ENCODE measurements at regions of chr3 and their contacts with region 1.

Region 1: DNA sequence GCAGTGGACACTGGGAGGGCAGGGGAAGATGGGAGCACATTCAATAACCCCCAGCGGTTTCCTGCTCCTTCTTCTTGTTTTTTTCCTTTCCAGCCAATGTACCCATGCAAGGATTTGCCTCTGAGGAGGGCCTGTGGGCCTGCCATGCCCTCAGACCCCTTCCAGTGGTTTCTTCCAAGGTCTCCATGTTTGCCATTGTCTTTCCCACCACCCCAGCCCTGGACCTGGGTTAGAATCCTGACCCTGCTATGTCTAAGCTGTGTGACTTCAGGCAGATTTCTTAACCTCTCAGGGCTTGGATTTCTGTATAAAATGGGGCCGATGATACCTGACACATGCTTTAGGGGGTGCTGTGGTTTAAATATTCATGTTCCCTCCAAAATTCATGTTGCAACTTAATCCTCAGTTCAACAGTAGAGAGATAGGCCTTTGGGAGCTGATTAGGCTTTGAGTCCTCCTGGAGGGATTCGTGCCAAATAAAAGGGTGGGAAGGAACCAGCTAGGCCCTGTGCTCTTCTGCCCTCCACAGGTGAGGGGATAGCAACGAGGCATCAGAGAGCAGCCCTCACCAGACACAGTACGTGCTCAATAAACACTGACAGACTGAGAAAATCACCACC is 46.3 kb upstream of the FLNB start:
- DNase-seq: peak in 1 of 2 experiments; percentile 60
- H3K4me3 ChIP-seq: no peak overlapping the region
- H3K4me3 Mint-ChIP-seq: no peak overlapping the region
- H3K27ac Mint-ChIP-seq: peak overlapping the region; percentile 49
- H3K4me1 ChIP-seq: peaks cover 32% of the 10 kb centered on the region
- H3K4me1 Mint-ChIP-seq: peaks cover 31% of the 10 kb centered on the region
- H3K27me3 ChIP-seq: no peaks in the 10 kb centered on the region
- H3K27me3 Mint-ChIP-seq: no peaks in the 10 kb centered on the region
- CTCF ChIP-seq: peak in 1 of 2 experiments; percentile 47

Region 2: GRCh38 chr3:57972531-57973111 is 10.7 kb after region 1 on chr3:
- CTCF ChIA-PET with region 1: interaction called, 11 read pairs
- POLR2A ChIA-PET with region 1: interaction called, 3 read pairs
- intact Hi-C with region 1: no loop called
- DNase-seq: no peak
- H3K4me3 ChIP-seq: no peak overlapping the region
- H3K4me3 Mint-ChIP-seq: peak overlapping the region; percentile 20
- H3K27ac Mint-ChIP-seq: peak overlapping the region; percentile 89
- H3K4me1 ChIP-seq: peaks cover 75% of the 10 kb centered on the region
- H3K4me1 Mint-ChIP-seq: peaks cover 37% of the 10 kb centered on the region
- H3K27me3 ChIP-seq: no peaks in the 10 kb centered on the region
- H3K27me3 Mint-ChIP-seq: no peaks in the 10 kb centered on the region
- CTCF ChIP-seq: no peak

Region 3: GRCh38 chr3:57998366-57999283 is 36.7 kb after region 1 on chr3:
- CTCF ChIA-PET with region 1: interaction called, 3 read pairs
- POLR2A ChIA-PET with region 1: no interaction called
- intact Hi-C with region 1: loop called (anchors 2 kb)
- DNase-seq: peak; percentile 68 to 78
- H3K4me3 ChIP-seq: no peak overlapping the region
- H3K4me3 Mint-ChIP-seq: peak overlapping the region; percentile 70
- H3K27ac Mint-ChIP-seq: peak overlapping the region; percentile 96
- H3K4me1 ChIP-seq: peaks cover 80% of the 10 kb centered on the region
- H3K4me1 Mint-ChIP-seq: peaks cover 35% of the 10 kb centered on the region
- H3K27me3 ChIP-seq: no peaks in the 10 kb centered on the region
- H3K27me3 Mint-ChIP-seq: no peaks in the 10 kb centered on the region
- CTCF ChIP-seq: no peak

Region 4: GRCh38 chr3:58008140-58009025 is 46.4 kb after region 1 on chr3 and contains the start of gene FLNB:
- CTCF ChIA-PET with region 1: interaction called, 10 read pairs
- POLR2A ChIA-PET with region 1: interaction called, 3 read pairs
- intact Hi-C with region 1: no loop called
- DNase-seq: peak; percentile 77 to 85
- H3K4me3 ChIP-seq: peak within 1 kb of the TSS; percentile 100
- H3K4me3 Mint-ChIP-seq: peak within 1 kb of the TSS; percentile 90
- H3K27ac Mint-ChIP-seq: peak within 1 kb of the TSS; percentile 63
- H3K4me1 ChIP-seq: peaks cover 60% of the 10 kb centered on the region
- H3K4me1 Mint-ChIP-seq: peaks cover 23% of the 10 kb centered on the region
- H3K27me3 ChIP-seq: no peaks in the 10 kb centered on the region
- H3K27me3 Mint-ChIP-seq: no peaks in the 10 kb centered on the region
- CTCF ChIP-seq: peak; percentile 74 to 88
- total RNA-seq, gene FLNB: 315 and 331 TPM in 2 replicates

Region 5: GRCh38 chr3:58111513-58112186 is 149.7 kb after region 1 on chr3:
- CTCF ChIA-PET with region 1: no interaction called
- POLR2A ChIA-PET with region 1: no interaction called
- intact Hi-C with region 1: loop called (anchors 5 kb)
- DNase-seq: peak; percentile 76 to 84
- H3K4me3 ChIP-seq: no peak overlapping the region
- H3K4me3 Mint-ChIP-seq: no peak overlapping the region
- H3K27ac Mint-ChIP-seq: peak overlapping the region; percentile 72
- H3K4me1 ChIP-seq: peaks cover 29% of the 10 kb centered on the region
- H3K4me1 Mint-ChIP-seq: peaks cover 33% of the 10 kb centered on the region
- H3K27me3 ChIP-seq: no peaks in the 10 kb centered on the region
- H3K27me3 Mint-ChIP-seq: no peaks in the 10 kb centered on the region
- CTCF ChIP-seq: no peak

Region 6: DNA sequence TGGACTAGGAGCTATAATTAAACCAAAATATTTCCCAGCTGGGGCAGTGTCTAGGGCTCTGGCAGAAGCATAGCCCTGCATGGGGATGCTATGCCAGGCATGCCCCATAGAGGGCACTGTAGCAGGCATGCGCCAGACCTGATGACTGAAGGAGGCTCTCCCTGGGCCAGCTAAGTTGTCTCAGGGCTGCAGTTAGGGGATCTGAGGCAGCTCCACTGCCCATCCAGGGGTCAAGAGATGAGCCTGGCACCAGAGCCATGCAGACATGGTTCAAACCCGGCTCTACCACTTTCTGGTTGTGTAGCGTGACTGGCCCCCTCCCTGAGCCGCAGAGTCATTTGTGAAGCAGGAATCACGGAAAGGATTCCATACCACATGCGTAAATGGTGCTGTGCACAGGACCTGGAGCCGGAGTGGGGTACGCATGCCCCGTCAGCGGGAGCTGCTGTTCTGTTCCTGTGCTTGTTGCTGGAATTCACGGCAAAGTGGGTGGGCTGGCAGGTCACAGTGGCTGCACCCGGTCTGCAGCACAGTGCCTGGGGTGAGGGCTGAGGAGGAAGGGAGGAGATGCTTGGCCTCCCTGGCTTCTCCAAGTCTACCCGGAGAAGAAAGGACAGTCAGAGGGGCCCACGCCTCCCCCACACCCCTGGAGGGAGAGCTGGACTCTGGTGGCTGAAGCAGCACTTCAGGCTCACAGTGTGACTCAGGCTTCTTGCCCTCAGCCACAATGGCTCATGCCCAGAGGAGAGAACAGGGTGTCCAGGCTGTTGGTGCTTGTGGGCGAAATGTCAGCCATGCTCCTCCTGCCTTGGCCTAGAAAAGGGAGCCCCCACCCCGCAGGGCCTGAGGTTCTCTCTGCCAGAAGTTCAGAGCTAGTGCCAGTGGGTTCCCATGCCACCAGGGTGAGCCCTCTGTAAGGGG is 205.8 kb after region 1 on chr3:
- CTCF ChIA-PET with region 1: interaction called, 10 read pairs
- POLR2A ChIA-PET with region 1: no interaction called
- intact Hi-C with region 1: loop called (anchors 5 kb)
- DNase-seq: peak; percentile 65 to 78
- H3K4me3 ChIP-seq: no peak overlapping the region
- H3K4me3 Mint-ChIP-seq: no peak overlapping the region
- H3K27ac Mint-ChIP-seq: peak overlapping the region; percentile 68
- H3K4me1 ChIP-seq: peaks cover 52% of the 10 kb centered on the region
- H3K4me1 Mint-ChIP-seq: peaks cover 48% of the 10 kb centered on the region
- H3K27me3 ChIP-seq: no peaks in the 10 kb centered on the region
- H3K27me3 Mint-ChIP-seq: no peaks in the 10 kb centered on the region
- CTCF ChIP-seq: peak; percentile 75 to 76